Posterior vena cava (tissue), 2 donors: ENCODE measurements at regions of chr7 and their contacts with region 1.

Region 1: GRCh38 chr7:24701261-24702235 is 55.7 kb downstream of the GSDME start:
- DNase-seq: no peak

Region 2: GRCh38 chr7:23191021-23191420 is 1510.5 kb before region 1 on chr7:
- intact Hi-C with region 1: loop called in 1 of 2 experiments (anchors 5 kb)
- DNase-seq: no peak